MCF 10A (cell line): ENCODE measurements at regions of chr5 and their contacts with region 1.

Region 1: DNA sequence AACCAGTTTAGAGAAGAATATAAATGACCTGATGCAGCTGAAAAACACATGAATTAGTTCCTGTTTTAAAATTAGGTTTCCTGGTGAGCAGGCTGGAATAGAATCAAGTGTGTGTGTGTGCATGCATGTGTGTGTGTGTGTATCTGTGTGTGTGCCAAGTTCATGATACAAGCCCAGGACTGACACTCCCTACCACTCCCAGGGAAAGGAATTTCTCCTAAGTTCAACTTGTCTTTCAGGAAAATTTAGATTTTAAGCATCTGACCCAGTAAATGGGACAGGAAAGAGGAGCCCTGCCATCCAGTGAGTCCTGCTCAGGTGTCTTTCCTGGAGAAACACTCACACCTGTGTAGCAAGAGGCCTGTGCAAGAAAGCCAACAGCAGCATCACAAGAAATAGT is 11.2 kb upstream of the SH3TC2 start:
- DNase-seq: no peak
- H3K4me3 Mint-ChIP-seq: no peak overlapping the region
- H3K27ac Mint-ChIP-seq: peak overlapping the region; percentile 53
- H3K4me1 Mint-ChIP-seq: peaks cover 32% of the 10 kb centered on the region
- H3K27me3 Mint-ChIP-seq: no peaks in the 10 kb centered on the region
- CTCF ChIP-seq: no peak

Region 2: DNA sequence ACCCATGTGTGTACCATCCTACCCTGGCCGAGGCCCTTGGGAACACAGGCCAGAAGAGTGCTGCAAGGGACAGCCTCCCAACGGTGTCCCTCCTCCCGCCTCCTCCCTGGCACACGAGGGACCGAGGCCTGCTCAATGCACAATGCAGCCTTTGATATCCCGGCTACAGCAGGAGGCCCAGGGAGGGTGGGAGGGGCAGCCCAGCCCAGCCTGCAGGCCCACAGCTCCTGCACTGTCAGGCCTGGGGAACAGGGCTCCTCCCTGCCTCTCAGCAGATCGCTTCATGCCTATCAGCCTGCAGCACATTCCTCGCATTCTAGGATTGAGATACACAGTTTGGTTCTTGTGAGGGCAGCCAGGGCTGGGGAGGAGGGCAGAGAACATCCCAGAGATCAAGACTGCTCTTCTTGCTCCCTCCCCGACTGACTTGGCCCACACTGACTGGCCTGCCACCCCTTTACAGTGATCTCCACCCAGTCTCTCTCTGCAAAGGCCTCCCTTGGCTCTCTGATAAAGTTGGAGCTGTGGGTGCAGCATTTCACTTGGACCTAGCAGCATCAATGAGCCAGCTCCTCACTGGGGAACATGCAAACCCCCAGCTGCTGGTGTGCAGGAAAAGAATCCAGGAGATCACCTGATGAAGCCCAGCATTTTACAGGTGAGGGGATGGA is 11.0 kb before region 1 on chr5 and contains the start of gene SH3TC2:
- CTCF ChIA-PET with region 1: interaction called, 5 read pairs
- POLR2A ChIA-PET with region 1: interaction called, 17 read pairs
- intact Hi-C with region 1: no loop called
- DNase-seq: peak; percentile 60
- H3K4me3 Mint-ChIP-seq: peak within 1 kb of the TSS; percentile 61
- H3K27ac Mint-ChIP-seq: peak within 1 kb of the TSS; percentile 97
- H3K4me1 Mint-ChIP-seq: peaks cover 66% of the 10 kb centered on the region
- H3K27me3 Mint-ChIP-seq: no peaks in the 10 kb centered on the region
- CTCF ChIP-seq: no peak
- total RNA-seq, gene SH3TC2: 6.2 and 7.2 TPM in 2 replicates